ENCODE measurements at regions of chr12 and their contacts with region 1.

Region 1: DNA sequence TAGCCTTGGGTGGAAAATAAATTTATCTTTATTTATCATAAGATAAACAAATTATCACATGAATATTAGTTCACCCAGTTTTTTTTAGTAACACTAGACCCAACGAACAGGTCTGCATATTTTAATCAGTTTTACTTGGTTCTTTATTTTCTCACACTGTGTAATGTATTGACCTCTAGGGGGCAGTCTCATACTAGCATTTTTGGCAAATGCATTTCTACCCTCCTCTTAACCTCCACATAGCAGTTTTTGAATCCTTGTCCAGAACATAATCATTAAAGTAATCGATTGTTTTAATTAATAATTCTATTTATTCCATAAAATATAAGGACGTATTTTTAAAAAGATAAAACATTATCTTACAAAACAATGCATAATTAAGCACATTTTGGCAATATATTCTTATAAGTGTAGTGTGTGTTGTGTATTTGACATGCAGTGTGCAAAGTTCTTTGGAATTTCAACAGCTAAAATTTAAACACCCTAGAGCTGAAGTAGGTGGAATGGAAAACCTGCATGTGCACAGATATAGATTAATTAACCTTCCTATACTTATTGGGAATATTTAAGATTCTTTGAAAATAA is 31.6 kb upstream of the PTPRQ start:
- DNase-seq: peak; percentile 80
- H3K4me3 ChIP-seq: no peak overlapping the region
- H3K27ac ChIP-seq: no peak overlapping the region
- H3K4me1 ChIP-seq: no peaks in the 10 kb centered on the region
- H3K27me3 ChIP-seq: no peaks in the 10 kb centered on the region

Region 2: GRCh38 chr12:80129895-80130530 is 282.4 kb before region 1 on chr12:
- in situ Hi-C with region 1: no loop called
- DNase-seq: peak; percentile 18
- H3K4me3 ChIP-seq: no peak overlapping the region
- H3K27ac ChIP-seq: no peak overlapping the region
- H3K4me1 ChIP-seq: peaks cover 10% of the 10 kb centered on the region; the same call in 1 of the 2 replicates
- H3K27me3 ChIP-seq: no peaks in the 10 kb centered on the region

Region 3: DNA sequence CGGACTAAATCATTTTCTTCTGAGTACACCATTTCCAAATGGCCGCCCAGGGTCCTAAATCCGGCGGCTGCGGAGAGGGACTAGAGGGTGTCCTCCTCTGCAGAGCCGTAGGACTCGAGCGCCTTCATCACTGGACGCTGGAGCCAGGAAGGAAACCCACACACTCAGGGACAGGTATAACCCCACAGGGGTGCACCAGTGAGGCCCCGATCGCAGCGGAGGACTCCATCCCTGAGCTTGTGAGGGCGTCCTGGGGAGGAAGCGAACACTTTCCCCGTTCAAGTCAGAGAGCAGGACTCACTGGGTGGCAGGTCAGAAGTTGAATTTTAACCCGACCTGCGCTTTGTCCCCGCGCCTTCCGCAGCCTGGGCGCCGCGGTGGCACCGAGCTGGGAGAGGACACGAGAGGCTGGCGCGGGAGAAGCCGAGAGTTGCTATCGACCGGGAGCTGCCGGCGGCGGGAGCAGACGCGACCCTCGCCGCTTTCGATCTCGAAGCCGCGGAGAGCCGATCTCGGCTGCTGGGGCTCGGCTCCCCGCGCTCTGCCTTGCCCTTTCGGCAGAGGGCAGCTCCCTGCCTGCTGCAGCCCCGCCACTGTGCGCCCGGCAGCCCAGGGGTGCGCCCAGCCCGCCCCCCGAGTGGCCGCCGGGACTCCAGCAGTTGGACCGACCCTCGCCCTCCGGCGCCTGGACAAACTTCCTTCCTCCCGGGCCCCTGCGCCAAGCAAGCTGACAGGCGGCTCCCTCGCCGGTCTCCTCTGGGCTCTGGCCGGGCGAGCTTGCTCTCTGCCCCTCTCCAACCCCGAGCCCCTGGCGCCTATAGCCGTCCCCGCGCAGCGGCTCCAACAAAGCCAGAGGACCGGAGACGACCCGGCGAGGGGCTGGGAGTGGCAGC is 524.3 kb after region 1 on chr12:
- in situ Hi-C with region 1: loop called (anchors 25 kb)
- DNase-seq: peak; percentile 68
- H3K4me3 ChIP-seq: peak overlapping the region; percentile 83
- H3K27ac ChIP-seq: no peak overlapping the region
- H3K4me1 ChIP-seq: no peaks in the 10 kb centered on the region
- H3K27me3 ChIP-seq: no peaks in the 10 kb centered on the region